Dorsolateral prefrontal cortex (tissue), 120 donors: ENCODE measurements at regions of chr1 and their contacts with region 1.

Region 1: DNA sequence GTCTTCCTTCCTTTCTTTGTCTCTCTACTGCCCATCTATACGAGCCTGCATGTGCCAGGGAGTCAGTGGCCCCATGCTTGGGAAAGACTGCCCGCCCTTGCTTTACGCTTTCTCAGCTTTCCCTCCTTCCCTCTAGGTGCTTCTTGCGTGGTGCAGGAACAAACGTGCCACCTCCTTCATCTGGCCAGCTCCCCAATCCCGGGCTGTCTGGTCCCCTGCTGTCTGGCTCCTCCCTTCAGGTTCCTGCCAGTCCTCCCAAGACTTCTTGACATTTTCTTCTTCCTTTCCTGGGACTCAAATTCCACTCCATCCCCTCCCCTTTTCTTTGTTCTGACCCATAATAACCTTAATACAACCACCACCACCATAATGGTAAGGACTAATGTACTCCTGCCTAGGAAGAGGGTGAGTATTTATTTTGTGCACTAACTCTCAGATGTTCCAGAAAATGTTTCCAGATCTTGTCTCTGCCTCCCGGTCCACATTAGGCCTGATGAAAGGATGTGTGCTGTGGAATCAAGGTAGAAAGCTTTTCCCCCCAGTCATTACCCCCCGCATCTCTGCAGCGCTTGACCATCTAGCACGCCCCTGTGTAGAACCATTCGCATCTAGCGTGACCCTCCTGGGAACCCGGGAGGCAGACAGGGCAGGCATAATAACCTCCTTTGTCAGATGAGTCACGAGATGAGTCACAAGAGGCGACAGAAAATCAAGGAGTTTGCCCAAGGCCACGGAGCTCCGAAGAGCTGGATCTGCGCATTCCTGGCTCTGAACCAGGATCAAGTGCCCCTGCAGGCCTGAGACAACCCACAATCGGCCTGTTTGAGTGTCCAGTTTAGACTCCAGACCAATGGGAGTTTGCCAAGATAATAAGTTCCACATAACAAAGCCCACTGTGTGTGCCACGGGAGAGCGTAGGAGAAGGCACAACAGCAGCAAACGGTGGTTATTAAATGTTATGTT is 60.1 kb upstream of the NEK2 start:
- DNase-seq: peak in 9 of 10 donors; percentile 61 to 84 (median 79)
- H3K4me3 ChIP-seq: peak overlapping the region in 2 of 59 donors; percentile 4 to 21
- H3K27ac ChIP-seq: peak overlapping the region; percentile 78 to 100 (median 97)
- H3K27me3 ChIP-seq: no peaks in the 10 kb centered on the region
- CTCF ChIP-seq: peak in 2 of 56 donors; percentile 3 to 18

Region 2: GRCh38 chr1:211541720-211542453 is 193.6 kb before region 1 on chr1:
- intact Hi-C with region 1: no loop called
- DNase-seq: no peak
- H3K4me3 ChIP-seq: no peak overlapping the region
- H3K27ac ChIP-seq: peak overlapping the region in 4 of 59 donors; percentile 11 to 31 (median 26)
- H3K27me3 ChIP-seq: no peaks in the 10 kb centered on the region
- CTCF ChIP-seq: no peak

Region 3: GRCh38 chr1:211703812-211704537 is 31.5 kb before region 1 on chr1:
- intact Hi-C with region 1: loop called (anchors 2 to 5 kb)
- DNase-seq: peak in 1 of 10 donors; percentile 23
- H3K4me3 ChIP-seq: peak overlapping the region in 1 of 59 donors; percentile 1
- H3K27ac ChIP-seq: peak overlapping the region in 58 of 59 donors; percentile 36 to 94 (median 81)
- H3K27me3 ChIP-seq: peaks cover 0 to under 1% (median 0%) of the 10 kb centered on the region in 45 donors
- CTCF ChIP-seq: no peak

Region 4: DNA sequence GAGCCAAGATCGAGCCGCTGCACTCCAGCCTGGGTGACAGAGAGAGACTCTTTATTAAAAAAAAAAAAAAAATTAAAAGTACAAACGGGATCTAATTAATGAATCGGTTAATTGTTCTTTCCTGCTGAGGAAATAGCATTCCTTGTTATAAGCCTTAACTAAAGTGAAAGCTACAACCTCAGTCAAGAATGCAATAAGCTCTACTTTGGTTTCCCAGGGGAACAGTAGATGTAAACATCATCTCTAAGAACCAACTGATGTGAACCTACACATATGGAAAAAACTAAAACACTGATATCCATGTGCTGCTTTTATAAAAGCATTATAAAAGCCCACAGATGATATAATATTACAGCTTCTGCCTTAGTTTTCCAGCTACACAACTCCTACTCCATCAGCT is 53.1 kb after region 1 on chr1:
- intact Hi-C with region 1: loop called in 1 of 2 experiments (anchors 5 kb)
- DNase-seq: no peak
- H3K4me3 ChIP-seq: peak overlapping the region in 3 of 59 donors; percentile 3 to 12 (median 4)
- H3K27ac ChIP-seq: peak overlapping the region in 53 of 59 donors; percentile 20 to 95 (median 82)
- H3K27me3 ChIP-seq: no peaks in the 10 kb centered on the region
- CTCF ChIP-seq: no peak